Activated naive CD4-positive, alpha-beta T cell treated with anti-CD3 and anti-CD28 coated beads for 36 hours (primary cell): ENCODE measurements at regions of chr2 and their contacts with region 1.

Region 1: DNA sequence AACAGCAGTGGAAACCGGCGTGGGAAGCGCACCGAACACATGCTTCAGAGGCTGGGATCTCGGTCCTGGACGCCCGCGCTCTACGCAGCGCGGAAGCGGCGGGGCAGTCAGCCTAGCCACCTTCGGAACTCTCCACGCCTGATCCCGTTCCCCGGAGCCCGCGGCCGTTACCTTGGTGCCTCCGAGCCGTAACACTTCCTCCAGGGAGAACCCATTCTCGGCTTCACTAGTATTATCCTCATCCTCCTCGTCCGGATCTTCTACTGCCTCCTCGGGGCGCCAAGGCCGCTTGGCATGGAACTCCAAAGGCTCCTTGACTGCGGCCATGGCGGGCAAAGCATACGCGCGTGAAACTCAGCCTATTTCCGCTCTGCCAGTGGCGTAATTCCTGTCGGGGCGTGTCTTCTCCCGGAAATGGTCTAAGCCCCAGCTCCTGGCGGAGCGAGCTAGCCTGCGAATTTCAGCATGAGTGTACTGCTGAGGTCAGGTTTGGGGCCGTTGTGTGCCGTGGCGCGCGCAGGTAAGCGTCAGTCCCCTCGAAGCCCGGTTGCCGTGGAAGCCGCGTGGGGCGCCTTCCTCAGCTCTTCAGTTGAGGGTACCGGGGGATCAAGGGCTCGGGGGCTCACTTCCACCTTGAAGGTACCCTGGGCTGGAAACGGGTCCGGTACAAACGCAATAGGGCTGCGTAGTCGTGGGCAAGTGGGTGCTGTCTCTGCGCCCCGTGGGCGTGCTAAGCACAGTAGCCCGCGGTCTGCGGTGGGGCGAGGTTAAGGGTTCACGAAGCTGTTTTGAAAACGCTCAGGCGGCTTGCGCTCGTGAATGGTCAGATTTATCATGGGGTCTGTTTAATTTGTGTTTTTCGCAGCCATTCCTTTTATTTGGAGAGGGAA is at the starts of genes CEBPZ and NDUFAF7:
- DNase-seq: peak; percentile 96
- H3K4me3 Mint-ChIP-seq: no peak within 1 kb of the TSS
- H3K27ac Mint-ChIP-seq: no peak within 1 kb of the TSS
- H3K4me1 Mint-ChIP-seq: peaks cover 40% of the 10 kb centered on the region
- H3K27me3 Mint-ChIP-seq: no peaks in the 10 kb centered on the region
- total RNA-seq, gene CEBPZ: 61.4 to 65.0 TPM
- total RNA-seq, gene NDUFAF7: 17.5 to 18.2 TPM

Region 2: GRCh38 chr2:37083873-37084794 is 147.4 kb before region 1 on chr2 and contains the starts of genes GPATCH11 and HEATR5B:
- CTCF ChIA-PET with region 1: no interaction called
- intact Hi-C with region 1: loop called (anchors 1 kb)
- DNase-seq: peak; percentile 93
- H3K4me3 Mint-ChIP-seq: no peak within 1 kb of the TSS
- H3K27ac Mint-ChIP-seq: no peak within 1 kb of the TSS
- H3K4me1 Mint-ChIP-seq: peaks cover 26% of the 10 kb centered on the region
- H3K27me3 Mint-ChIP-seq: no peaks in the 10 kb centered on the region
- total RNA-seq, gene GPATCH11: 9.8 to 10.4 TPM
- total RNA-seq, gene HEATR5B: 15.5 to 15.8 TPM

Region 3: GRCh38 chr2:37196320-37197195 is 34.9 kb before region 1 on chr2 and contains the start of gene CEBPZOS:
- CTCF ChIA-PET with region 1: no interaction called
- intact Hi-C with region 1: loop called (anchors 1 kb)
- DNase-seq: peak; percentile 93
- H3K4me3 Mint-ChIP-seq: peak within 1 kb of the TSS; percentile 98
- H3K27ac Mint-ChIP-seq: peak within 1 kb of the TSS; percentile 97
- H3K4me1 Mint-ChIP-seq: peaks cover 23% of the 10 kb centered on the region
- H3K27me3 Mint-ChIP-seq: no peaks in the 10 kb centered on the region
- total RNA-seq, gene CEBPZOS: 30.3 to 30.7 TPM

Region 4: DNA sequence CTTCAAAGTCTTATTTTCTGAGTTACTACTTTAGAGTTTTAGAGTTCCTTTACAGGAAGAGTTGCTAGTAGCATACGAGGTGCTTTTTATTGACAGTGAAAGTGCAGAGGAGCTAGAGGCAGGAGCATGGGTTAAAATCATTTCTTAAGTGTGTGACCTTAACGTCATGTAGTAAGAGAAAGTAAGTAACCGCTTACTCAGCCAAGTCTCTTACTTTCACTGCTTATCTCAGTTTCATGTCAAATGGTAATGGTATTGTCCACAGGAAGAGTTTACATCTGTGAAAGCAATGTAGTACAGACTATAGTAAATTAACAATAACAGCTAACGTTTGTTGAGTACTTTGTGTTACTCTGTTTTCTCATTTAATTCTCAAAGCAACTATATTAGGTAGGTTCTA is 12.5 kb after region 1 on chr2:
- CTCF ChIA-PET with region 1: interaction called, 4 read pairs
- intact Hi-C with region 1: loop called (anchors 1 kb)
- DNase-seq: no peak
- H3K4me3 Mint-ChIP-seq: no peak overlapping the region
- H3K27ac Mint-ChIP-seq: peak overlapping the region; percentile 65
- H3K4me1 Mint-ChIP-seq: peaks cover 13% of the 10 kb centered on the region
- H3K27me3 Mint-ChIP-seq: no peaks in the 10 kb centered on the region

Region 5: GRCh38 chr2:37357530-37357929 is 126.0 kb after region 1 on chr2:
- CTCF ChIA-PET with region 1: no interaction called
- intact Hi-C with region 1: no loop called
- DNase-seq: no peak
- H3K4me3 Mint-ChIP-seq: no peak overlapping the region
- H3K27ac Mint-ChIP-seq: no peak overlapping the region
- H3K4me1 Mint-ChIP-seq: no peaks in the 10 kb centered on the region
- H3K27me3 Mint-ChIP-seq: peaks cover 55% of the 10 kb centered on the region

Region 6: GRCh38 chr2:37585982-37586621 is 354.6 kb after region 1 on chr2:
- CTCF ChIA-PET with region 1: no interaction called
- intact Hi-C with region 1: loop called (anchors 5 kb)
- DNase-seq: peak; percentile 85
- H3K4me3 Mint-ChIP-seq: peak overlapping the region; percentile 25
- H3K27ac Mint-ChIP-seq: peak overlapping the region; percentile 67
- H3K4me1 Mint-ChIP-seq: peaks cover 76% of the 10 kb centered on the region
- H3K27me3 Mint-ChIP-seq: no peaks in the 10 kb centered on the region

Region 7: DNA sequence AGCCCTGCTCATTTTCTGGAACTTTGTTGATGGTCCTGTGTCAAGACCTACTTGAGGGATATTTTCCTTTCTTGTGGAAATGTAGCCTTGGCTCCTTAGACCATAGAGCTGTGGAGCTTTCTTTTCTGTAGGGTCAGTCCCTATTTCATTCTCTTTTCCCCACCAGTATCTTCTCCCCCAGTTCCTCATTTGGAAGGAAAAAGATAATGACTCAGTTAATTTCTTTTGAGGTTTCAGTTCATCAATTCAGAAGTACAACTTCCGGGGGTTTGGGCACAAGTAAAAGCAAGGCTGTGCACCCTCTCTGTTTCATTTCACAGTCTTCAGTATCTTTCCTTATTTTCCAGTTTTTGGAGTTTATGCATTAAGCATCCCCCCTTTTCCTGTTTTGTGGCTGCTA is 369.2 kb after region 1 on chr2:
- CTCF ChIA-PET with region 1: no interaction called
- intact Hi-C with region 1: no loop called
- DNase-seq: no peak
- H3K4me3 Mint-ChIP-seq: no peak overlapping the region
- H3K27ac Mint-ChIP-seq: no peak overlapping the region
- H3K4me1 Mint-ChIP-seq: peaks cover 27% of the 10 kb centered on the region
- H3K27me3 Mint-ChIP-seq: no peaks in the 10 kb centered on the region

Region 8: GRCh38 chr2:37871456-37872191 is 640.1 kb after region 1 on chr2:
- CTCF ChIA-PET with region 1: interaction called, 5 read pairs
- intact Hi-C with region 1: loop called (anchors 2 kb)
- DNase-seq: no peak
- H3K4me3 Mint-ChIP-seq: peak overlapping the region; percentile 25
- H3K27ac Mint-ChIP-seq: peak overlapping the region; percentile 86
- H3K4me1 Mint-ChIP-seq: peaks cover 30% of the 10 kb centered on the region
- H3K27me3 Mint-ChIP-seq: peaks cover 12% of the 10 kb centered on the region